ENCODE measurements at regions of chr2 and their contacts with region 1.

Region 1: DNA sequence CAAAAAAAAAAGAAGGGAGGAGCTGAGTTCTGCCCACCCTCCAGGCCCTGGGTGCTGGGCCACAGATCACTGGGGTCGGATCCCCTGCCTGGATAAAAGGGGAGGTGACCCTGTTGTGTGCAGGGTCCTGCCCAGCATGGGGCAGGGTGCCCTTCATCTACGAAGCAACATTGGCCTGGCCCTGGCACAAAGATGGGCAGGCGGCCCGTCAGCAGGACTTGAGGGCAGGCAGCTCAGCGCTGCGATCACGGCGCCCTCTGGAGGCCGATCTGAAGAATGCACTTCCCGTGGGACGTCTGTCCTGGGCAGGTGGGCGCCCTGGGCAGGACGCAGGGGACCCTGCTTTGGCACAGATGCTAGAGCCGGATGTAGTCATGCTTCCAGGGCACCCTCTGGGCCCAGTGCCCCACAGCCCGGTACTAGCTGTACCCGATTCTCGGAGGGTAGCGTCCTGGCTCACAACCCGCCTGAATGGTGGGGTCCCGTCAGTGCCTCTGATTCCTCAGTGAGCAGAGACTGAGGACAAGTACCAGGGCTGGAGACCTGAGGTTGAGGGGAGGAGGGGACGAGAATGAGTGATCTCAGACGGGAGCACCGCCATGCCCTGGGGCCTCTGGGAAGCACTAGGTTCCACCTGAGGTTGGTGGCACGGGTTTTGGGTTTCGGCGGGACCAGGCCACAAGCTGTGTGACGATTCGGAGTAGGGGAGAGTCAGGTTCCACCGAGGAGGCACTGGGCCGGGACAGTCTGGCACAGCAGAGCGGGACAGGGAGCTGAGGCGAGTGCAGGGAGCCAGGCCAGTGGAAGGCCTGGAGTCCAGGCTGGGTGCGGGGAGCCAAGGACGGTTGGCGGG is 18.0 kb downstream of the ARID5A start:
- DNase-seq: peak; percentile 74
- ATAC-seq: peak; percentile 71
- H3K4me3 Mint-ChIP-seq: no peak overlapping the region
- H3K27ac Mint-ChIP-seq: peak overlapping the region; percentile 46
- H3K4me1 Mint-ChIP-seq: peaks cover 26% of the 10 kb centered on the region
- H3K27me3 Mint-ChIP-seq: no peaks in the 10 kb centered on the region
- CTCF ChIP-seq: peak; percentile 98

Region 2: GRCh38 chr2:96407041-96407918 is 147.2 kb before region 1 on chr2:
- CTCF ChIA-PET with region 1: interaction called, 44 read pairs
- POLR2A ChIA-PET with region 1: interaction called, 6 read pairs
- intact Hi-C with region 1: loop called (anchors 5 kb)
- DNase-seq: peak; percentile 78
- ATAC-seq: peak; percentile 90
- H3K4me3 Mint-ChIP-seq: no peak overlapping the region
- H3K27ac Mint-ChIP-seq: peak overlapping the region; percentile 94
- H3K4me1 Mint-ChIP-seq: peaks cover 30% of the 10 kb centered on the region
- H3K27me3 Mint-ChIP-seq: no peaks in the 10 kb centered on the region
- CTCF ChIP-seq: peak; percentile 74

Region 3: DNA sequence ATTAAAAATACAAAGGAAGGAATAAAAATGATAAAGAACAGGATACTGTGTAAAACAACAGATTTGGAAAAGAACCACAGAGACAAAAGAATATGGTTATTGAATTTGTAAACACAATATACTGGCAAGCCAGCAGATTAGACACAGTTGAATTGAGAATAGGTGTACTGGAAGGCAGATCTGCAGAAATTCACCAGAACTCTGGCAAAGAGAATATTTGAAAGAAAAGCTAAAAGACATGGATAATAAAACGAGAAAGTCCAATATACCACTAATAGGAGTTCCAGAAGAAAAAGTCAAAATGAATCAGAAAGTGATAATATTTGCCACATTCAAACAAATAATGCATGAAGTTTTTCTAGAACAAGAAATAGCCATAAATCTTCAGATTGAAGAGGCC is 37.4 kb before region 1 on chr2:
- CTCF ChIA-PET with region 1: interaction called, 14 read pairs
- POLR2A ChIA-PET with region 1: interaction called, 438 read pairs
- intact Hi-C with region 1: no loop called
- DNase-seq: no peak
- ATAC-seq: no peak
- H3K4me3 Mint-ChIP-seq: no peak overlapping the region
- H3K27ac Mint-ChIP-seq: no peak overlapping the region
- H3K4me1 Mint-ChIP-seq: no peaks in the 10 kb centered on the region
- H3K27me3 Mint-ChIP-seq: peaks cover 1% of the 10 kb centered on the region
- CTCF ChIP-seq: no peak

Region 4: DNA sequence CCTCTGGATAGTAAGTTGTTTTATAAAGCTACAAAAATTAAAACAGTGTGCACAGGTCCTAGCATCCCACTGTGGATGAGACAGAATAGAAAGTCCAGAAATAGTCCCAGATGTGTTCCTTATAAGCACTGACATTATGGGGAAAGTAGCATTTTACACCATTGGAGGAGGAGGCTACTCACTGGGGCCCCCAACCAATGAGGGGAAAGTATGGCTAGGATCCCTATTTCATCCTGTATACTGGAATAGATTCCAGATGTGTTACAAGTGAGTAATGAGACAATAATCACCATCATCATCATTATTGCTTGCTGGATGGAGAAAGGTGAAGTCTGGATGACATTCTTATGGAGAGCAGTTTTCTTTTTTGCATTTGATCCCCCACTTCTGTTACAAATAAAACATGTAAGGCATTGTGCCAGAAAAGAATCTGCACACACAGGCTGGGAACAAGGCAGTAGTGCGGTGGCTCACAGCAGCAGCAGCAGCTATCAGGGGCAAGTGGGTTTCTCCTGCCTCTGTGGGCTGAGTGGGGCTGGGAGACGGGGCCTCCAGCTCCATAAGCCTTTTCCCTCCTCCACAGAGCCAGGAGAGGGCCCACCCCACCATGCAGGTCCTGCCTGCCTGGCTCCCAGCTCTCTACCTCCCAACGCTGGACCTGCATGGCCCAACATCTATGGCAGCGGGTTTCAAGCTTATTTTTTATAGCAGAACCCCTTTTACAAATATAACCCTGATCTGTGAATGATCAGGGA is 12.9 kb before region 1 on chr2:
- CTCF ChIA-PET with region 1: interaction called, 42 read pairs
- POLR2A ChIA-PET with region 1: interaction called, 438 read pairs
- intact Hi-C with region 1: no loop called
- DNase-seq: no peak
- ATAC-seq: no peak
- H3K4me3 Mint-ChIP-seq: no peak overlapping the region
- H3K27ac Mint-ChIP-seq: no peak overlapping the region
- H3K4me1 Mint-ChIP-seq: peaks cover 63% of the 10 kb centered on the region
- H3K27me3 Mint-ChIP-seq: no peaks in the 10 kb centered on the region
- CTCF ChIP-seq: no peak

Region 5: GRCh38 chr2:96594691-96595152 is 40.2 kb after region 1 on chr2:
- CTCF ChIA-PET with region 1: interaction called, 16 read pairs
- POLR2A ChIA-PET with region 1: no interaction called
- intact Hi-C with region 1: no loop called
- DNase-seq: peak; percentile 39
- ATAC-seq: peak; percentile 84
- H3K4me3 Mint-ChIP-seq: no peak overlapping the region
- H3K27ac Mint-ChIP-seq: peak overlapping the region; percentile 90
- H3K4me1 Mint-ChIP-seq: peaks cover 37% of the 10 kb centered on the region
- H3K27me3 Mint-ChIP-seq: no peaks in the 10 kb centered on the region
- CTCF ChIP-seq: no peak

Region 6: DNA sequence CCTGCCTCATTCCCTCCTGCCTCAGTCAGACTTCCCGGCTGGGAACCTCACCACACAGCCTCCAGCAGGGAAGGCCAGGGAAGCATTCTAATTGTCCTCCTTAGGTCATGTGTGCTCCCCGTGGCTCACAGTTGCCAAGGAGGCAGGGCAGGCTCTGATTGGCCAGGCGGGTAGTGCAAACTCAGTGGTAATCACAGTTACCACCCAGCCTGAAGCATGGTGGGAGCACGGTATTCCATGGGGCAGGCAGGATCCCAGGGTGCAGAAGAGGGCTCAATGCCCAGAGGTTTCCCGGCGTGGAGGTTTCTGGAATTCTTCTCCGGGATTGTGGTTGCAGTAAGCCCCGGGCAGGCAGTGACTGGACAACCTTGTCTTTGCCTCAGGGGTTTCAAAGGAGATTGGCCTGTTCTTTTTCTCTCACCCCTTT is 115.2 kb after region 1 on chr2:
- CTCF ChIA-PET with region 1: no interaction called
- POLR2A ChIA-PET with region 1: no interaction called
- intact Hi-C with region 1: no loop called
- DNase-seq: no peak
- ATAC-seq: no peak
- H3K4me3 Mint-ChIP-seq: no peak overlapping the region
- H3K27ac Mint-ChIP-seq: no peak overlapping the region
- H3K4me1 Mint-ChIP-seq: no peaks in the 10 kb centered on the region
- H3K27me3 Mint-ChIP-seq: no peaks in the 10 kb centered on the region
- CTCF ChIP-seq: no peak